Left ventricle myocardium superior (tissue), 1 donor: ENCODE measurements at regions of chr1 and their contacts with region 1.

Region 1: DNA sequence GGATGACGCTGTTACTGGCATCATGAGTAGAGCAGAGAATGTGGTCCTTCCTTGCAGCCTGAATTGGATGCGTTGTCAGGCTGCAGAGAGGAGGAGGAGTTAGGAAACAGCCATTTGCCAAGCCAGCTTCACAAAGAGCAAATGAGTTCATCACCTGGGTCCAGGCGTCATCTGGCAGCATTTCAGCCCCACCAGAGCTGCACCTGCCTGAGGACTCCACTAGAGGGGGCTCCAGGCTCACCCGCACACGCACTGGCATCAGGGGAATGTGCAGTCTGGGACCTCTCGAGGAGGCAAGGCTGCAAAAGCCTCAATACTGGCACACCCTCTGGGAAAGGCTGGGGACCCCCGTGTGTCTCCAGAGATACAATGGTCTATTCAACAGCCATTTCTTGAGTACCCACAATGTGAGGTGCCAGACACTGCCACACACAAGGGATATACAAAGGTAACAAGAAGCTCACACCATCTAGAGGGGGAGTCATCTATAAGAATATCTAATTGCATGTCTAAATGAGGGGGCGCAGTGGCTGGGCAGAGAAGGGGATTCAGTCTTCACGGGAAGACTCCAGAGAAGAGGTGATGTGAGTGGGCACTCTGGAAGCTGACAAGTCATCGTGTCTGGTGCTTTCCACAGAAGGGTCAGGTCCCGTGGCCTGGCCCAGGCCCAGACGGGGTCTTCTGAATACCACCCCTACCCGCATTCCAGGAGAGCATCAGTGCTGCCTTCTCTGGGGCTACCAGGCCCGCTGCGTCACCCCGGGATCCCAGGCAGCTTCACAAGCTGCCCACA is 53.5 kb upstream of the CNTN2 start:
- DNase-seq: peak; percentile 80
- ATAC-seq: peak; percentile 89

Region 2: DNA sequence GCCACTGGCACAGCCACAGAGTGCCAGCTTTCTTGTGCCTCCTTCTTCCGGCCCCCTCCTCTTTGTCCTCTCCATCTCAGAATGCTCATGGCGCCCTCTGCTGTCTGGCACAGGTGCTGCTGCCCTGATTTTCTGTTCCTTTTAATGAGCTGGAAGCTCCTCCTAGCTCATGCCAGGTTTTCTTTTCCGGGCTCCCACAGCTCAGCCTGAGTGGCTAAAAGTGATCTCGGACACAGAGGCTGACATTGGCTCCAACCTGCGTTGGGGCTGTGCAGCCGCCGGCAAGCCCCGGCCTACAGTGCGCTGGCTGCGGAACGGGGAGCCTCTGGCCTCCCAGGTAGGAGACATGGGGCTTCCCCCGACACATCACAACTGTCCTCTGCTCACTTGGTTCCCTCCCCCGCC is 72.2 kb after region 1 on chr1:
- intact Hi-C with region 1: loop called (anchors 10 kb)
- DNase-seq: peak; percentile 79
- ATAC-seq: peak; percentile 80

Region 3: GRCh38 chr1:205255941-205256780 is 266.7 kb after region 1 on chr1:
- intact Hi-C with region 1: loop called (anchors 10 kb)
- DNase-seq: peak; percentile 92
- ATAC-seq: peak; percentile 93

Region 4: GRCh38 chr1:205354259-205354904 is 364.9 kb after region 1 on chr1:
- intact Hi-C with region 1: no loop called
- DNase-seq: no peak
- ATAC-seq: peak; percentile 56